PC-9 (cell line): ENCODE measurements at regions of chr3 and their contacts with region 1.

Region 1: GRCh38 chr3:113557374-113557773 is 25.0 kb downstream of the SIDT1 start:
- DNase-seq: peak; percentile 43 to 70
- H3K4me3 ChIP-seq: no peak overlapping the region; the same call in 1 of the 2 replicates
- H3K27ac ChIP-seq: peak overlapping the region; percentile 60
- H3K4me1 ChIP-seq: peaks cover 23% of the 10 kb centered on the region
- H3K27me3 ChIP-seq: no peaks in the 10 kb centered on the region
- CTCF ChIP-seq: no peak

Region 2: GRCh38 chr3:113531826-113532697 is 25.3 kb before region 1 on chr3 and contains the start of gene SIDT1:
- CTCF ChIA-PET with region 1: no interaction called
- POLR2A ChIA-PET with region 1: no interaction called
- intact Hi-C with region 1: loop called (anchors 2 kb)
- DNase-seq: peak; percentile 54 to 55
- H3K4me3 ChIP-seq: peak within 1 kb of the TSS; percentile 64
- H3K27ac ChIP-seq: peak within 1 kb of the TSS; percentile 33
- H3K4me1 ChIP-seq: peaks cover 32% of the 10 kb centered on the region
- H3K27me3 ChIP-seq: no peaks in the 10 kb centered on the region
- CTCF ChIP-seq: no peak
- total RNA-seq, gene SIDT1: 1.2 and 3.3 TPM in 2 replicates

Region 3: GRCh38 chr3:113614402-113614801 is 57.0 kb after region 1 on chr3:
- CTCF ChIA-PET with region 1: no interaction called
- POLR2A ChIA-PET with region 1: no interaction called
- intact Hi-C with region 1: no loop called
- DNase-seq: no peak
- H3K4me3 ChIP-seq: no peak overlapping the region
- H3K27ac ChIP-seq: no peak overlapping the region
- H3K4me1 ChIP-seq: no peaks in the 10 kb centered on the region
- H3K27me3 ChIP-seq: no peaks in the 10 kb centered on the region
- CTCF ChIP-seq: no peak